ENCODE measurements at regions of chr4 and their contacts with region 1.

Region 1: DNA sequence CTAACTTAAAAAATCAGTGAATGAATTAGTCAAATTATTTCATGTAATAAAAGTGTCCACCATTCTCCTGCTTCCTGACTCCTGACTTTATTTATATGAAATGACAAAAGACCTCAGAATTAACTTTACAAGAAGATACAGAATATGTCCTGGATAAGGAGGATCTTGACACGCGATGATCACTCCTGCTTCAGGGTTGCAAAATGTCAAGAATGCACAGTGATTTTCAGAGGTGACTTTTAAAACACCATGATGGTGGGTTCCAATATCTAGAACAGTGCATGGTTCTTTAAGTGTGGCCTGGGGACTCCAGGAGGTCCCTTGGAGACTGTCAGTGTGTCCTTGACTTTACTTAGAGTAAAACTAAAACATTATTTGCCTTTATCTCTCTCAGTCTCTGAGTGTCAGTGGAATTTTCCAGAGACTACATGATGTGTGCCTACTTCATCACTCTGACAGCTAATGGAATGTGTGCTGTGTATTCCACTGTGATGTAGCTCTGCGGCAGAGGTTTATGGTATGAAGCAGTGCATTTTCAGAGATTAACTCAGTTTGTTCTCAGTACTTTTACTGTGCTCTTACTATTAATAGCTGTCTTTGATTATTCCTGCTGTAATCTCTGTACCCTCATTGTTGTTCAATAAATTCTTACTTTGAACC is 85.8 kb downstream of the MANBA start:
- DNase-seq: no peak
- ATAC-seq: no peak
- H3K4me3 ChIP-seq: no peak overlapping the region
- H3K4me3 Mint-ChIP-seq: no peak overlapping the region
- H3K27ac ChIP-seq: no peak overlapping the region
- H3K27ac Mint-ChIP-seq: no peak overlapping the region
- H3K4me1 ChIP-seq: peaks cover 2 to 10% of the 10 kb centered on the region in 2 experiments
- H3K4me1 Mint-ChIP-seq: peaks cover 10 to 14% (median 10%) of the 10 kb centered on the region in 3 donors
- H3K27me3 ChIP-seq: no peaks in the 10 kb centered on the region
- H3K27me3 Mint-ChIP-seq: no peaks in the 10 kb centered on the region

Region 2: DNA sequence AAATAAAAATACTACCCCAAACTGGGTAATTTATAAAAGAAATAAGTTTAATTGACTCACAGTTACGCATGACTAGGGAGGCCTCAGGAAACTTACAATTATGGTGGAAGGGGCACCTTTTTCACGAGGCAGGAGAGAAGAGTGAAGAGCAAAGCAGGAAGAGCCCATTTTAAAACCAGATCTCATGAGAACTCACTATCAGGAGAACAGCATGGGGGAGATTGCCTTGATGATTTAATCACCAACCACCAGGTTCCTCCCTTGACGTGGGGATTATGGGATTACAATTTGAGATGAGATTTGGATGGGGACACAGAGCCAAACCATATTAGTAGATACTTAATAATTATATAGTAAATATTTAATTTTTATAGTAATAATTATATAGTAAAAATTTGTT is 203.9 kb after region 1 on chr4:
- CTCF ChIA-PET with region 1: no interaction called
- POLR2A ChIA-PET with region 1: interaction called in 1 of 2 experiments, 14 read pairs
- DNase-seq: no peak
- ATAC-seq: no peak
- H3K4me3 ChIP-seq: no peak overlapping the region
- H3K4me3 Mint-ChIP-seq: no peak overlapping the region
- H3K27ac ChIP-seq: no peak overlapping the region
- H3K27ac Mint-ChIP-seq: no peak overlapping the region
- H3K4me1 ChIP-seq: no peaks in the 10 kb centered on the region
- H3K4me1 Mint-ChIP-seq: peaks cover 9 to 23% (median 21%) of the 10 kb centered on the region in 3 donors
- H3K27me3 ChIP-seq: no peaks in the 10 kb centered on the region
- H3K27me3 Mint-ChIP-seq: no peaks in the 10 kb centered on the region